ENCODE measurements at regions of chr2 and their contacts with region 1.

Region 1: GRCh38 chr2:9951272-9951972 is at the start of gene GRHL1:
- DNase-seq: peak; percentile 92
- H3K4me3 Mint-ChIP-seq: peak within 1 kb of the TSS; percentile 85
- H3K27ac Mint-ChIP-seq: peak within 1 kb of the TSS; percentile 82
- H3K4me1 Mint-ChIP-seq: peaks cover 24% of the 10 kb centered on the region
- H3K27me3 Mint-ChIP-seq: peaks cover 54% of the 10 kb centered on the region
- total RNA-seq, gene GRHL1: 1.4 and 1.5 TPM in 2 replicates

Region 2: GRCh38 chr2:9748577-9748976 is 202.8 kb before region 1 on chr2:
- intact Hi-C with region 1: no loop called
- DNase-seq: no peak
- H3K4me3 Mint-ChIP-seq: no peak overlapping the region
- H3K27ac Mint-ChIP-seq: peak overlapping the region; percentile 0
- H3K4me1 Mint-ChIP-seq: peaks cover 46% of the 10 kb centered on the region
- H3K27me3 Mint-ChIP-seq: peaks cover 11% of the 10 kb centered on the region

Region 3: DNA sequence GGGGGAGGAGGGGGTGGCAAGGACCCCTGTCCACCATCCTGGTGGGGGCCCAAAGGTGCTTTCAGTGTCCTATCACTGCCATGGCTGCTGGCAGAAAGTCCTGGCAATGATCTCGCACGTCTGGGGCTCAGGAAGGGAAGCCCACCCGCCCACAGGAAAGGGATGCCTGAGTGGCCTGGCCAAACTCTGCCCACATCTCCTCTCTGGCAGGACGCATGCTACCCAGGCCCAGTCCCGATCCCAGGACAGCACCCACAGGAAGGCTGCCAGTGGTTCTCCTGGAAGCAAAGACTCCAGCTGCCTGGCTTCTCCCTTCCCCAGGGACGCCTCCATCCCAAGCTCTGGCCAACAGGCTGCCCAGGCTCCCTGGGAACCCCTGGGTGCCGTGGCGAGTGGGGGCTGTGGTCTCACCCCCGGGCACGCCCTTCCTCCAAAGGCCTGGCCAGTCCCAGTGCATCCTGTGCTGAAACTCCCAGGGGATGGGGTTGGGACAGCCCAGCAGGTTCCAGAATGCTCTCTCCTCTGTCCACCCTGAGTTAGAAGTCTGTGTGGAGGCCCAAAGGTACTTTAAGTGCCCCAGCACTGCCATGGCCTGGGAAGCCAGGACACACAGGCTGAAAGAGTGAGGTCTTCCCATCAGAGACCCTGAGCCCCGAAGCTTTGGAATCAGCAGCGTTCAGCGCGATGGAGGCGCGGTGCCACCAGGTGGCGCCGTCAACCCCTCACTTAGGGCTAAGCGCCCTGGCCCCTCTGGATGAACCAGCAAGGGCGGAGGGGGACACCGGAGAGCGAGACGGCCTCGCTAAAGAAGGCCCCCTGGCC is 137.9 kb before region 1 on chr2:
- intact Hi-C with region 1: loop called (anchors 10 kb)
- DNase-seq: peak; percentile 56
- H3K4me3 Mint-ChIP-seq: no peak overlapping the region
- H3K27ac Mint-ChIP-seq: peak overlapping the region; percentile 61
- H3K4me1 Mint-ChIP-seq: peaks cover 12% of the 10 kb centered on the region
- H3K27me3 Mint-ChIP-seq: peaks cover 11% of the 10 kb centered on the region

Region 4: DNA sequence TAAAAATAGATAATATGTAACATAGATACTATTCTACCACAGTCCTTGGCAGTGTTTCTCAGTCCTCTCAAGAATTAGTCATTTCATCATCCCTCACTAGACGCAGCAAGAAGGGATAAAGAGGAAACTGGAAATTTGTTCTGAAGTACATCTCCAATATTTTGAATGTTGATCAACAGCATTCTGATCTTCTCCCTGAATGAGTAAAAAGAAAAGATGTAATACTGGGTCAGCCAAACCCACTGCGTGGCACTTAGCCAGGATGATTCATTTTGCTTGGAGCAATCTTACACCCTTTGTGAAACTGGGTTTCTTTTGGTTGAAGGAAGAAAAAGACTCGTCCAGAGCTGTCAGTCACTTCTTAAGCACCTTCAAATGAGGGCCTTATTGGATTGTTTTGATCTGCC is 54.1 kb before region 1 on chr2:
- intact Hi-C with region 1: loop called (anchors 2 kb)
- DNase-seq: no peak
- H3K4me3 Mint-ChIP-seq: no peak overlapping the region
- H3K27ac Mint-ChIP-seq: peak overlapping the region; percentile 14
- H3K4me1 Mint-ChIP-seq: peaks cover 29% of the 10 kb centered on the region
- H3K27me3 Mint-ChIP-seq: no peaks in the 10 kb centered on the region

Region 5: DNA sequence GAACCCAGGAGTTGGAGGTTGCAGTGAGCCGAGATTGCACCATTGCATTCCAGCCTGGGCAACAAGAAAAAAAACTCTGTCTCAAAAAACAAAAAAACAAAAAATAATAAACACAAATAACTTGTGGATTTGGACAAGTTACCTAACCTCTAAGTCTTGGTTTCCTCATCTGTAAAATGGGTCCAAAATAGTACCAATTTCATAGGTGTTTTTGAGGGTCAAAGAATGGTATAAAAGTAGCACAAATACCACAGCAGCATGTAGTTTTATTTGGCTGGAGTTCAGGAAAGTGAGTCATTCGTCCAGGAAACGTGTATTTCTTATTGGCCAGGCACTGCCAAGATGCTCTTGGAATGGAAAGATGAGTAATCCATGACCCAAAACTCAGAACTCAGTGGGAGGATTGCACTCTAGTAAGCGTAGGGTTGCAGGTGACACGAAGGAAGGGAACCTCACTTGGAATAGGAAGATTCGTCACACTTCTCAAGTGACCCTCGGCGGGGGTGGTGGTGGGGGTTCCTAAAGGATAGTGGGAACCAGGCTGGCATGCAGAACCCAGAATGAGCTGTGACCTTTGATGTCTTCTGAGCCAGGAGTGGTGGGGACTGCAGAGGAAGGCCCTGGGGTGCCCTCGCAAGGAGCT is 24.5 kb after region 1 on chr2:
- intact Hi-C with region 1: loop called (anchors 1 kb)
- DNase-seq: no peak
- H3K4me3 Mint-ChIP-seq: no peak overlapping the region
- H3K27ac Mint-ChIP-seq: peak overlapping the region; percentile 4
- H3K4me1 Mint-ChIP-seq: peaks cover 72% of the 10 kb centered on the region
- H3K27me3 Mint-ChIP-seq: peaks cover 4% of the 10 kb centered on the region

Measured in activated T-helper 1 cell treated with anti-CD3 and anti-CD28 coated beads, Interleukin-12 subunit alpha, Interleukin-12 subunit beta, Interleukin-2, Interleukin-4 antibody, amounts not matched to agents 30 ng/mL and 10 ng/mL and 1 ng/mL, durations not matched to agents 14 hours and 24 hours and 36 hours (primary cell).